ENCODE measurements at regions of chr16 and their contacts with region 1.

Region 1: GRCh38 chr16:85659805-85660495 is 28.8 kb downstream of the GINS2 start:
- DNase-seq: peak; percentile 76 to 87
- H3K4me3 ChIP-seq: no peak overlapping the region
- H3K4me3 Mint-ChIP-seq: no peak overlapping the region
- H3K27ac Mint-ChIP-seq: no peak overlapping the region
- H3K4me1 ChIP-seq: no peaks in the 10 kb centered on the region
- H3K4me1 Mint-ChIP-seq: no peaks in the 10 kb centered on the region
- H3K27me3 ChIP-seq: no peaks in the 10 kb centered on the region
- H3K27me3 Mint-ChIP-seq: no peaks in the 10 kb centered on the region
- CTCF ChIP-seq: peak; percentile 92 to 96

Region 2: GRCh38 chr16:85461814-85462713 is 197.9 kb before region 1 on chr16:
- CTCF ChIA-PET with region 1: no interaction called
- POLR2A ChIA-PET with region 1: interaction called, 10 read pairs
- intact Hi-C with region 1: no loop called
- DNase-seq: peak; percentile 47 to 52
- H3K4me3 ChIP-seq: peak overlapping the region; percentile 40
- H3K4me3 Mint-ChIP-seq: peak overlapping the region; percentile 69
- H3K27ac Mint-ChIP-seq: no peak overlapping the region
- H3K4me1 ChIP-seq: peaks cover 36% of the 10 kb centered on the region
- H3K4me1 Mint-ChIP-seq: peaks cover 23% of the 10 kb centered on the region
- H3K27me3 ChIP-seq: no peaks in the 10 kb centered on the region
- H3K27me3 Mint-ChIP-seq: no peaks in the 10 kb centered on the region
- CTCF ChIP-seq: no peak

Region 3: GRCh38 chr16:85621698-85622428 is 38.1 kb before region 1 on chr16:
- CTCF ChIA-PET with region 1: no interaction called
- POLR2A ChIA-PET with region 1: no interaction called
- intact Hi-C with region 1: no loop called
- DNase-seq: peak; percentile 91 to 92
- H3K4me3 ChIP-seq: no peak overlapping the region
- H3K4me3 Mint-ChIP-seq: peak overlapping the region; percentile 56
- H3K27ac Mint-ChIP-seq: peak overlapping the region; percentile 52
- H3K4me1 ChIP-seq: peaks cover 40% of the 10 kb centered on the region
- H3K4me1 Mint-ChIP-seq: peaks cover 51% of the 10 kb centered on the region
- H3K27me3 ChIP-seq: no peaks in the 10 kb centered on the region
- H3K27me3 Mint-ChIP-seq: no peaks in the 10 kb centered on the region
- CTCF ChIP-seq: no peak

Region 4: GRCh38 chr16:85645021-85645664 is 14.8 kb before region 1 on chr16:
- CTCF ChIA-PET with region 1: interaction called, 3 read pairs
- POLR2A ChIA-PET with region 1: interaction called, 10 read pairs
- intact Hi-C with region 1: no loop called
- DNase-seq: peak; percentile 90 to 92
- H3K4me3 ChIP-seq: no peak overlapping the region
- H3K4me3 Mint-ChIP-seq: peak overlapping the region; percentile 39
- H3K27ac Mint-ChIP-seq: peak overlapping the region; percentile 73
- H3K4me1 ChIP-seq: peaks cover 28% of the 10 kb centered on the region
- H3K4me1 Mint-ChIP-seq: peaks cover 24% of the 10 kb centered on the region
- H3K27me3 ChIP-seq: no peaks in the 10 kb centered on the region
- H3K27me3 Mint-ChIP-seq: no peaks in the 10 kb centered on the region
- CTCF ChIP-seq: no peak

Region 5: DNA sequence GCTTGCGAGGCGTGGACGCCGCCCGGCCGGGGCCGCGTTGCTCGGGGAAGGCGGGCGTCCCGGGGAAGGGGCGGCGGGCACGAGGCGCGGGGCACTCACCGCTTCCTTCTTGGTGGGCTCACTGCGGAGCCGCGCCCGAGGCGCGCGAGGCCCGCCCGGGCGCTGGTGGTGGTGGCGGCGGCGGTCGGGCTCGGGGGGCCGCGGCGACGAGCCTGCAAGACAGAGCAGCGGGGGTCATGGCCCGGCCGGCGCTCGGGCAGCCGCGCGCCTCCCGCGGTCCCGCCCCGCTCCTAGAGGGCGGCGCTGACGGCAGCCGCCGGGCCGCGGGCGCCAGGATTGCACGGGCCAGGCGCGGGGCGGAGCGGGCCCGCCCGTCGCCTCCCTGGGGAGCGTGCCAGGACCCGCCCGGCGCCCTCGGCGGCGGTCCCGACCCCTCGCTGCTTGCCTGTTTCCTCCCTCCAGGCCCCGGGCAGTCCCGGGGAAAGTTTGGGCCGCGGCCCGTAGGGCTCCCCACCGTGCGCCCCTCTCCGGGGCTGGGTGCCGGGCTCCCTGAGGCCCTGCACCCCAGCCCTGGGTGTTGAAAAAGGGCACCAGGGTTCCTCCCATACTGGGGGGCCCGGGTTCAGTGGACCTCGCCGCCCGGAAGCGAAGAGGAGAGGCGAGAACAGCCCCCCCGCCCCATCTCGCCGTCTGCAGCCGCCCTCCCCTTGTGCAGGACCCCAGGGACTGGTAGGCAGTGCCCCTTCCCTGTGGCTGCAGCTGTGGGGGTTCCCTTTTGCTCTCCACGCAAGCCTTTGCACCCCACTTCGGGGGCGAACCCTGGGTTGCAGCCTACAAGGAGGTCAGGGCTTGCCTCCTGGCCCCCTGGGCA is 91.1 kb after region 1 on chr16 and contains the start of gene C16orf74:
- CTCF ChIA-PET with region 1: no interaction called
- POLR2A ChIA-PET with region 1: no interaction called
- intact Hi-C with region 1: no loop called
- DNase-seq: peak in 1 of 2 experiments; percentile 75
- H3K4me3 ChIP-seq: peak within 1 kb of the TSS; percentile 72
- H3K4me3 Mint-ChIP-seq: peak within 1 kb of the TSS; percentile 90
- H3K27ac Mint-ChIP-seq: peak within 1 kb of the TSS; percentile 69
- H3K4me1 ChIP-seq: peaks cover 28% of the 10 kb centered on the region
- H3K4me1 Mint-ChIP-seq: peaks cover 10% of the 10 kb centered on the region
- H3K27me3 ChIP-seq: no peaks in the 10 kb centered on the region; the same call in 1 of the 2 replicates
- H3K27me3 Mint-ChIP-seq: no peaks in the 10 kb centered on the region
- CTCF ChIP-seq: no peak
- total RNA-seq, gene C16orf74: 3.8 and 4.0 TPM in 2 replicates

Measured in Caco-2 (cell line).